ENCODE measurements at regions of chr1 and their contacts with region 1.

Region 1: GRCh38 chr1:110209715-110210603 is at the start of gene KCNC4:
- DNase-seq: peak; percentile 88
- CTCF ChIP-seq: no peak

Region 2: GRCh38 chr1:110196917-110197765 is 12.8 kb before region 1 on chr1:
- CTCF ChIA-PET with region 1: interaction called, 55 read pairs
- POLR2A ChIA-PET with region 1: no interaction called
- DNase-seq: peak; percentile 88
- CTCF ChIP-seq: peak; percentile 95

Region 3: GRCh38 chr1:110254996-110255787 is 45.2 kb after region 1 on chr1:
- CTCF ChIA-PET with region 1: interaction called, 38 read pairs
- POLR2A ChIA-PET with region 1: no interaction called
- DNase-seq: no peak
- CTCF ChIP-seq: no peak

Region 4: GRCh38 chr1:110298991-110299390 is 89.0 kb after region 1 on chr1:
- CTCF ChIA-PET with region 1: interaction called, 27 read pairs
- POLR2A ChIA-PET with region 1: no interaction called
- DNase-seq: no peak
- CTCF ChIP-seq: no peak

Region 5: DNA sequence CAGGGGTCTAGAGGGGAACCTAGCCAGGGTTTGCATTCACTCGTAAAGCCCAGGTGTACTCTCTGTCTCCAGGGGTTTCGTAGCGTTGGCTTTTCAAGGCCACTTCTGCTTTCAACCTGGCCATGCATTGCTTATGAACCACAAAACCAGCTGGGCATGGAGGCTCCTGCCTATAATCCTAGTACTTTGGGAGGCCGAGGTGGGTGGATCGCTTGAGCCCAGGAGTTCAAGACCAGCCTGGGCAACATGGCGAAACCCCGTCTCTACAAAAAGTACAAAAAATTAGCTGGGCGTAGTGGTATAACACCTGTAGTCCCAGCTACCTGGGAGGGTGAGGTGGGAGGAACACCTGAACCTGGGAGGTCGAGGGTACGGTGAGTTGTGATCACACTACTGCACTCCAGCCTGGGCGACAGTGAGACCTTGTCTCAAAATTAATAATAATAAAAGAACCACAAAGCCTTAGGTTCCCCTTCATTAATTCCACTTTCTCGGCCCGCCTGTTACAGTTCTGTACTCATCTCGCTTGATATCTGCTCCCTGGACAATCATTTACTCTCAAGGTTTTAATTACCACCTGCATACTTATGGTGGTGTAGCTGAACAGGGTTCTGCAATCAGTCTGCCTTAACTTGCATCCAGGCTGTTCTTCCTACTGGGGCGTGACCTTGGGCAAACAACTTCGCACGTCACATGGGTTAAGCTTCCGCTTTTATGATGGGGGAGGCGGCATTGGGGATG is 174.8 kb after region 1 on chr1:
- CTCF ChIA-PET with region 1: interaction called, 12 read pairs
- POLR2A ChIA-PET with region 1: no interaction called
- DNase-seq: peak; percentile 41
- CTCF ChIP-seq: no peak

Region 6: GRCh38 chr1:110460253-110461220 is 250.6 kb after region 1 on chr1:
- CTCF ChIA-PET with region 1: interaction called, 295 read pairs
- POLR2A ChIA-PET with region 1: no interaction called
- DNase-seq: peak; percentile 82
- CTCF ChIP-seq: peak; percentile 97